T-cell (primary cell): ENCODE measurements at regions of chr10 and their contacts with region 1.

Region 1: GRCh38 chr10:68871731-68872342 is 29.3 kb upstream of the DDX50 start:
- DNase-seq: no peak
- ATAC-seq: no peak
- H3K4me3 ChIP-seq: no peak overlapping the region
- H3K4me3 Mint-ChIP-seq: no peak overlapping the region
- H3K27ac ChIP-seq: no peak overlapping the region
- H3K27ac Mint-ChIP-seq: no peak overlapping the region
- H3K4me1 ChIP-seq: no peaks in the 10 kb centered on the region
- H3K4me1 Mint-ChIP-seq: peaks cover 4 to 9% (median 5%) of the 10 kb centered on the region in 3 donors
- H3K27me3 ChIP-seq: no peaks in the 10 kb centered on the region
- H3K27me3 Mint-ChIP-seq: no peaks in the 10 kb centered on the region

Region 2: GRCh38 chr10:68811314-68812009 is 60.4 kb before region 1 on chr10:
- CTCF ChIA-PET with region 1: no interaction called
- POLR2A ChIA-PET with region 1: no interaction called
- DNase-seq: no peak
- ATAC-seq: no peak
- H3K4me3 ChIP-seq: no peak overlapping the region
- H3K4me3 Mint-ChIP-seq: no peak overlapping the region
- H3K27ac ChIP-seq: no peak overlapping the region
- H3K27ac Mint-ChIP-seq: no peak overlapping the region
- H3K4me1 ChIP-seq: no peaks in the 10 kb centered on the region
- H3K4me1 Mint-ChIP-seq: no peaks in the 10 kb centered on the region
- H3K27me3 ChIP-seq: no peaks in the 10 kb centered on the region
- H3K27me3 Mint-ChIP-seq: no peaks in the 10 kb centered on the region

Region 3: GRCh38 chr10:68826764-68827591 is 44.9 kb before region 1 on chr10 and contains the start of gene STOX1:
- CTCF ChIA-PET with region 1: no interaction called
- POLR2A ChIA-PET with region 1: no interaction called
- DNase-seq: peak in 33 of 35 experiments; percentile 3 to 68 (median 31)
- ATAC-seq: peak; percentile 76 to 81 (median 78)
- H3K4me3 ChIP-seq: peak within 1 kb of the TSS; percentile 49 to 88
- H3K4me3 Mint-ChIP-seq: peak within 1 kb of the TSS; percentile 75 to 79 (median 77)
- H3K27ac ChIP-seq: no peak within 1 kb of the TSS
- H3K27ac Mint-ChIP-seq: no peak within 1 kb of the TSS
- H3K4me1 ChIP-seq: peaks cover 0 to 25% of the 10 kb centered on the region in 2 experiments
- H3K4me1 Mint-ChIP-seq: peaks cover 5 to 21% (median 20%) of the 10 kb centered on the region in 3 donors
- H3K27me3 ChIP-seq: peaks cover 0 to 16% of the 10 kb centered on the region in 2 experiments
- H3K27me3 Mint-ChIP-seq: peaks cover 0 to 3% of the 10 kb centered on the region in 2 donors
- total RNA-seq, gene STOX1: 0.16 to 1.1 (median 0.50) TPM

Region 4: GRCh38 chr10:70206762-70207161 is 1334.9 kb after region 1 on chr10:
- CTCF ChIA-PET with region 1: no interaction called
- POLR2A ChIA-PET with region 1: interaction called in 1 of 2 experiments, 14 read pairs
- DNase-seq: no peak
- ATAC-seq: no peak
- H3K4me3 ChIP-seq: no peak overlapping the region
- H3K4me3 Mint-ChIP-seq: no peak overlapping the region
- H3K27ac ChIP-seq: no peak overlapping the region
- H3K27ac Mint-ChIP-seq: no peak overlapping the region
- H3K4me1 ChIP-seq: no peaks in the 10 kb centered on the region
- H3K4me1 Mint-ChIP-seq: no peaks in the 10 kb centered on the region
- H3K27me3 ChIP-seq: no peaks in the 10 kb centered on the region
- H3K27me3 Mint-ChIP-seq: no peaks in the 10 kb centered on the region